Activated CD8-positive, alpha-beta T cell treated with anti-CD3 and anti-CD28 coated beads, Interleukin-2, amount 10 ng/mL, durations not matched to agents 7 days and 5 days (primary cell): ENCODE measurements at regions of chr16 and their contacts with region 1.

Region 1: DNA sequence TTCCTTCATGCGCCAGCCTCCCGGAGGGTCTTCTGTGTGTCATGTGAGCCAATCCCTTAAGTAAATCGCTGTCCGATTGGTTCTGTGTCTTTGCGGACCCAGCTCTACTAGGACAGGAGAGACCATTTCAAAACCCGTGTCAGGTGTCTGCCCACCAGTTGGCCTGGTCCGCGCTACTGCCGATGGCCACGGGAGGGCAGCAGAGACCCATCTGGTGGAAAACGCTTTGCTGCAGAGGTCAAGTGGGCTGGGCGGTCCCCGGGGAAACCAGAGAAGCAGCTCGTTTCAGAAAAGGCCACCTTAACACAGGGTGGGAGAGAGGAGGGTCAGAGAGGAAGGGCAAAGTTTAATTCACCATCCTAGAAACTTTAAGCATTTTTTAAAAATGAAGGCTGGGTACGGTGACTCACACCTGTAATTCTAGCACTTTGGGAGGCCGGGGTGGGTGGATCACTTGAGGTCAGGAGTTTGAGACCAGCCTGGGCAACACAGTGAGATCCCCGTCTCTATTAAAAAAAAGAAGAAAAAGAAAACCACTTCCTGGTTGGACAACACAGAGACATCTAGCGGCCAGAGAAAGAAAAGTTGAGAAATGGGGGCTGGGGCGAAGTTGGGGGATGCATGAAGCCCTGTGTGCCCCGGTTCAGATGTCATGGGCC is 2.8 kb upstream of the CIBAR2 start:
- DNase-seq: peak; percentile 89
- ATAC-seq: peak; percentile 93
- H3K4me3 Mint-ChIP-seq: peak overlapping the region; percentile 68
- H3K27ac Mint-ChIP-seq: peak overlapping the region; percentile 91
- H3K4me1 Mint-ChIP-seq: peaks cover 13% of the 10 kb centered on the region
- H3K27me3 Mint-ChIP-seq: no peaks in the 10 kb centered on the region

Region 2: DNA sequence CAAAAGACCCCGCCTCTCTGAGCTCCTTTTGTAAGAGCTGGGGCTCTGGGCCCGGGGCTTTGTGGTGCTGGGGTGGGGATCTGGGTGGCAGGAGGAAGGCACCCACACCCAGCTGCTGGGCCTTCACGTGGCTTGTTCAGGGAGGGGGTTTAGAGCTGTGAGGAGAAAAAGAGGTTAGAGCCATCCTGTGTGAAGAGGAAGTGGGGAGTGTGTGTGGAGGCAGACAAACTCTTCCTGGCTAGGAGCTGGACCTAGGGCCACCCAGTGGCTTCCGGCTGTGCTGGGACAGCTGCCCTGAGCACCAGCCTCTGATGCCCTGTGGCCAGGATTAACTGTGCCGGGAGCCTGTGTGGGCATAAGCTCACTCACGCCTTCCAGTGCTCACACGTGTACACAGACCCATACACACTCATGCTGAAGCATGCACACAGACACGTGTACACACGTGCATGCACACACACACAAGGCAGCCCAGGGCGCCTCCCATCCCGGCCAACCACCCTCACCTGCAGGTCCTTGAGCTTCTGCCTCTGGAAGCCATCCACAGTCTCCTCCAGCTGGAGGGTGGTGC is 10.1 kb before region 1 on chr16:
- CTCF ChIA-PET with region 1: interaction called, 39 read pairs
- POLR2A ChIA-PET with region 1: no interaction called
- DNase-seq: peak; percentile 59
- ATAC-seq: peak; percentile 86
- H3K4me3 Mint-ChIP-seq: peak overlapping the region; percentile 43
- H3K27ac Mint-ChIP-seq: peak overlapping the region; percentile 93
- H3K4me1 Mint-ChIP-seq: peaks cover 46% of the 10 kb centered on the region
- H3K27me3 Mint-ChIP-seq: peaks cover 2% of the 10 kb centered on the region

Region 3: GRCh38 chr16:85126705-85127419 is 11.8 kb after region 1 on chr16:
- CTCF ChIA-PET with region 1: interaction called, 18 read pairs
- POLR2A ChIA-PET with region 1: no interaction called
- DNase-seq: no peak
- ATAC-seq: no peak
- H3K4me3 Mint-ChIP-seq: no peak overlapping the region
- H3K27ac Mint-ChIP-seq: no peak overlapping the region
- H3K4me1 Mint-ChIP-seq: no peaks in the 10 kb centered on the region
- H3K27me3 Mint-ChIP-seq: no peaks in the 10 kb centered on the region

Region 4: DNA sequence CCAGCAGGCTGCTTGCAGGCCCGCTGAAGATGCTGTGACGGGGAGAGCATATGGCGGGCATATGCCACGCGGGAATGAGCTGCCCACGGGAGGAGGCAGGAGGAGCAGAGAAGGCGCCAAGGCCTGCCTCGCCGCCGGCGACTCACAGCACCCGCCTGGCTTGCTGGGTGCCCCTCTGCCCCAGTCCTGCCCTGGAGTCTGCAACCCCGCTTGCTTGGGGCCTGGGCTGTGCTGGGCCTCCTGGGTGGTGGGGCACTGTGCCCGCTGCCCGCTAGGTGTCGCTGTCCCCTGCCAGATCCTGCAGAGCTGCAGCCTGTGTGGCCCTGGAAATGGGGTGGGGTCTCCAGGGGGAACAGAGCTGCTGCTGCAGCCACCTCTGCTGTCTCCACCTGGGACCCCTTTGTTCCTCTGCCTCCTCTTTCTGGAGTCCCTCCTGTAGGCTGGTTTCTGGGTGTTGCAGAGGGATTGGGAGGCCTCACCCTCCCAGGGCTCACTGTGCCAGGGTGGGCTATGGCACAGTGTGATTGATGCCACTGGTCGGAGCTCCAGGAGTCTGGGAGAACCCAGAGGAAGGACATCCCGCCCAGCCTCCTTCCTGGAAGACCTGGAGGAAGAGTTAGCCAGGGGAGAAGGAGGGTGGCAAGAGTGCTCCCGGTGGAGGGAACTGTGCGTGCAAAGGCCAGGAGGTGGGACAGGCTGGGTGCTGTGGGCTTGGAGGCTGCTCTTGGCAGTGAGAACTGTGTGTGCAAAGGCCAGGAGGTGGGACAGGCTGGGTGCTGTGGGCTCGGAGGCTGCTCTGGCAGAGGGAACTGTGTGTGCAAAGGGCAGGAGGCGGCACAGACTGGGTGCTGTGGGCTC is 138.3 kb after region 1 on chr16:
- CTCF ChIA-PET with region 1: interaction called, 13 read pairs
- POLR2A ChIA-PET with region 1: no interaction called
- DNase-seq: peak; percentile 73
- ATAC-seq: peak; percentile 88
- H3K4me3 Mint-ChIP-seq: no peak overlapping the region
- H3K27ac Mint-ChIP-seq: no peak overlapping the region
- H3K4me1 Mint-ChIP-seq: peaks cover 23% of the 10 kb centered on the region
- H3K27me3 Mint-ChIP-seq: peaks cover 10% of the 10 kb centered on the region